ENCODE measurements at regions of chr14 and their contacts with region 1.

Region 1: DNA sequence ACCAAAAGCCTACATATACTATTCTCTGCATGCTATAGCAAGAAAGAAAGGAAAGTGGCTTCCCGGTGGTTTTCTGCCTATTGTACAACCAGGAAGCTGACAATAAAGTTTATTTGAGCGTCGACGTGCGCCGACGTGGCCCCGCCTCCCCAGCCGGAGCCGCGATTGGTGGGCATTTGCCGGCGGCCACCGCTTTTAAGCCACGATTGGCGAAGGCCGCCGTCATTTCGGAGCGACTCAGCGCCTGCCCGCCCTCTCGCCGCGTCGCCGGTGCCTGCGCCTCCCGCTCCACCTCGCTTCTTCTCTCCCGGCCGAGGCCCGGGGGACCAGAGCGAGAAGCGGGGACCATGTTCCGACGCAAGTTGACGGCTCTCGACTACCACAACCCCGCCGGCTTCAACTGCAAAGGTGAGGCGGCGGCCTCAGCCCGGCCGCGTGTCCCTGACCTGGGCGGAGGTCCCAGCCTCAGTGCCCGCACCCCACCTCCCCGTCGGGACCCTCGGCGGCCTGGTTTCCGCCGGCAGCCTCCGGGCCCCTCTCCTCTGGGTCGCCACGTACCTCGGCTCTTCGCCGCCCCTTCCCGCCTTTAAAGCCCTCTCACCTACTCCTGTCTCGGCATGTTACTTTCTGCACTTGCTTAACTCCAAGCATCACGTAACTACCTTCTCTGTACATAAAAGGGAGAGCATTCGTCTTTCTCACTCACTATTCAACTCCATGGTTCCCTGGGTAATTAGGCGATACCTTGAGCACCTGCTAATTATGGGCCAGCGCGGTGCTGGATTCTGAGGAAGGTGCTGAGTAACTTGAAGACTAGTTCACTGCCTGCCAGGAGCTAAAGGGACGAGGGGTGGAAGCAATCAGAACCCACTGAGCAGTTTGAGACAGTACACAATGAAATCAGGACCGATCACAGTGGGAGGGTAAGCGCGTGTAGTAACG is at the start of gene RTRAF:
- DNase-seq: peak; percentile 83 to 97 (median 89)
- ATAC-seq: peak; percentile 96
- H3K4me3 ChIP-seq: peak within 1 kb of the TSS; percentile 87
- H3K4me3 Mint-ChIP-seq: peak within 1 kb of the TSS; percentile 99
- H3K27ac ChIP-seq: peak within 1 kb of the TSS; percentile 84 to 87
- H3K27ac Mint-ChIP-seq: peak within 1 kb of the TSS; percentile 94
- H3K4me1 ChIP-seq: peaks cover 18% of the 10 kb centered on the region
- H3K4me1 Mint-ChIP-seq: peaks cover 53% of the 10 kb centered on the region
- H3K27me3 ChIP-seq: no peaks in the 10 kb centered on the region
- H3K27me3 Mint-ChIP-seq: no peaks in the 10 kb centered on the region
- CTCF ChIP-seq: no peak
- total RNA-seq, gene RTRAF: 155 to 157 TPM

Region 2: DNA sequence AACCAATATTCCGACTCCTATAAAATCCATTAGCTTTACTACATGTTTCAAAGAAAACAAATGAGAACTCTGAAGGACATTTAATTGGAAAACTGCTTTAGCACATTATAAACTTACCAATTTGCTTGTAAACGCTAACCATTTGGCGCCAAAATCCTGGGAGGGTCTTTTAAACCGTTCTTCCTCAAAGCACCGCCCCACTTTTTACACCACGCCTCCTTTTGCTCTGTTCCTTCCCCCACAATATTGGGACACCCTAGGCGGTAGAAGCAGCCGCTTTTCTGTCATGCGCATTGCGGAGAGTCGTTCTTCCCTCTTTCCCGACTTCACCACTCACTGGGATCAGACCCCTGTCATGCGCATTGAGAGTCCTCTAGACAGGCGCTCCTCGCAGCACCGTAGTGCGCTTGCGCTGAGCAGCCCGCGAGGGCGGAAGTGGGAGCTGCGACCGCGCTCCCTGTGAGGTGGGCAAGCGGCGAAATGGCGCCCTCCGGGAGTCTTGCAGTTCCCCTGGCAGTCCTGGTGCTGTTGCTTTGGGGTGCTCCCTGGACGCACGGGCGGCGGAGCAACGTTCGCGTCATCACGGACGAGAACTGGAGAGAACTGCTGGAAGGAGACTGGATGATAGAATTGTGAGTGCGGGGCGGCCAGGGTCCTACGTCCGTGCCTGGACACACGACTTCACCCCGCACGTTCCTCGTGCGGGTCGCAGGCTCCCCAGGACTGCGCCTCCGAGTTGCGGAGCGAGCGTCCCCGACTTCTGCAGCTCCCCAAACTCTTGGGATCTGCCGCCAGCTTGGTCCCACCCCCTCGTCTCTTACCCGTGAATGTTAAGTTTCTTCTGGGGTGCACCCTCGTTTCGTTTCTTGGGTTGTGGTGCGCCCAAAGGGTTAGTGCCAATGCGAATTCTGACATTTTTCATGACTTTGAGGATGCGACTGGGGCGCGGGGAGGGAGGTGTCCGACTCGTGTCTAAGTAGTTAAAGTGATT is 749.5 kb before region 1 on chr14 and contains the start of gene TMX1:
- CTCF ChIA-PET with region 1: no interaction called
- POLR2A ChIA-PET with region 1: no interaction called
- intact Hi-C with region 1: loop called in 1 of 2 experiments (anchors 5 kb)
- DNase-seq: peak; percentile 63 to 95 (median 80)
- ATAC-seq: peak; percentile 90
- H3K4me3 ChIP-seq: peak within 1 kb of the TSS; percentile 86
- H3K4me3 Mint-ChIP-seq: no peak within 1 kb of the TSS
- H3K27ac ChIP-seq: peak within 1 kb of the TSS; percentile 69 to 75
- H3K27ac Mint-ChIP-seq: no peak within 1 kb of the TSS
- H3K4me1 ChIP-seq: peaks cover 19% of the 10 kb centered on the region
- H3K4me1 Mint-ChIP-seq: peaks cover 42% of the 10 kb centered on the region
- H3K27me3 ChIP-seq: no peaks in the 10 kb centered on the region
- H3K27me3 Mint-ChIP-seq: no peaks in the 10 kb centered on the region
- CTCF ChIP-seq: no peak
- total RNA-seq, gene TMX1: 9.5 to 11.0 TPM

Region 3: DNA sequence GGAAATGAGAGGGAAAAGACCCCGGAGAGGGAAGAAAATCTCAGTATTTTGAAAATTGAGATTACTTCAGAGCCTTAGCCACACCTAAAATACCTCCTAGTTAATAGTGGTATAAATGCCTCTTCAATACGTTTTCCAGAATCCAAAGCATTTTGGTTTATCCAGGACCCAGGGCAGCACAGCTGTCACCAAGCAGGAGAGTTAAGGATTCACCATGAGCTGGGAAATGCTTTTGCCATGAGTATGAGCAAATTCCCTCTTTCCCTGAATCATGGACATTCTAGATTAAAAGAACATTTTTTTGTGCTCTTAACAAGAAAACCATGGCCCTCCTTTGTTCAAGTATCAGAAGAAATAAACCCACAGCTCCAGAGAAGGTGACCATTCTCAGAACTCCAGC is 22.0 kb before region 1 on chr14:
- CTCF ChIA-PET with region 1: no interaction called
- POLR2A ChIA-PET with region 1: no interaction called
- intact Hi-C with region 1: no loop called
- DNase-seq: no peak
- ATAC-seq: no peak
- H3K4me3 ChIP-seq: no peak overlapping the region
- H3K4me3 Mint-ChIP-seq: no peak overlapping the region
- H3K27ac ChIP-seq: no peak overlapping the region
- H3K27ac Mint-ChIP-seq: peak overlapping the region; percentile 10
- H3K4me1 ChIP-seq: peaks cover 3% of the 10 kb centered on the region
- H3K4me1 Mint-ChIP-seq: peaks cover 27% of the 10 kb centered on the region
- H3K27me3 ChIP-seq: no peaks in the 10 kb centered on the region
- H3K27me3 Mint-ChIP-seq: no peaks in the 10 kb centered on the region
- CTCF ChIP-seq: no peak

Region 4: DNA sequence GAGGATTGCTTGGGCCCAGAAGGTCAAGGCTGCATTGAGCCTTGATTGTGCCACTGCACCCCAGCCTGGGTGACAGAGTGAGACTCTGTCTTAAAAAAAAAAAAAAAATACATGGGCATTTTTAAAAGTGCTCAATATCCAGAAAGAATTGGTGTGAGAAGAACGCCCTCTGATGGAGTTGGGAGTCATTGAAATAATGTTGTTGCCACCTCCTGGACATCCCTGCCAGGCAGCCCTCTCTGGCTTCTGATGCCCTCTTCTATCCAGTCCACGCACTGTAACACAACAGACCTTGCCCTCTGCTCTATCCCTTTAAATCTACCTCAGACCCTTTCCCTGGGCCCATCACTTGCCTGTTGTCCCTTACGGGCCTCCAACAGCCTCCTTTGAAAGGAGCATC is 282.8 kb after region 1 on chr14:
- CTCF ChIA-PET with region 1: no interaction called
- POLR2A ChIA-PET with region 1: no interaction called
- intact Hi-C with region 1: loop called in 1 of 2 experiments (anchors 10 kb)
- DNase-seq: peak in 4 of 14 experiments; percentile 12 to 74 (median 64)
- ATAC-seq: no peak
- H3K4me3 ChIP-seq: no peak overlapping the region
- H3K4me3 Mint-ChIP-seq: no peak overlapping the region
- H3K27ac ChIP-seq: no peak overlapping the region
- H3K27ac Mint-ChIP-seq: no peak overlapping the region
- H3K4me1 ChIP-seq: peaks cover 20% of the 10 kb centered on the region
- H3K4me1 Mint-ChIP-seq: peaks cover 12% of the 10 kb centered on the region
- H3K27me3 ChIP-seq: peaks cover 20 to 21% of the 10 kb centered on the region in 2 experiments
- H3K27me3 Mint-ChIP-seq: peaks cover 42% of the 10 kb centered on the region
- CTCF ChIP-seq: no peak

Region 5: DNA sequence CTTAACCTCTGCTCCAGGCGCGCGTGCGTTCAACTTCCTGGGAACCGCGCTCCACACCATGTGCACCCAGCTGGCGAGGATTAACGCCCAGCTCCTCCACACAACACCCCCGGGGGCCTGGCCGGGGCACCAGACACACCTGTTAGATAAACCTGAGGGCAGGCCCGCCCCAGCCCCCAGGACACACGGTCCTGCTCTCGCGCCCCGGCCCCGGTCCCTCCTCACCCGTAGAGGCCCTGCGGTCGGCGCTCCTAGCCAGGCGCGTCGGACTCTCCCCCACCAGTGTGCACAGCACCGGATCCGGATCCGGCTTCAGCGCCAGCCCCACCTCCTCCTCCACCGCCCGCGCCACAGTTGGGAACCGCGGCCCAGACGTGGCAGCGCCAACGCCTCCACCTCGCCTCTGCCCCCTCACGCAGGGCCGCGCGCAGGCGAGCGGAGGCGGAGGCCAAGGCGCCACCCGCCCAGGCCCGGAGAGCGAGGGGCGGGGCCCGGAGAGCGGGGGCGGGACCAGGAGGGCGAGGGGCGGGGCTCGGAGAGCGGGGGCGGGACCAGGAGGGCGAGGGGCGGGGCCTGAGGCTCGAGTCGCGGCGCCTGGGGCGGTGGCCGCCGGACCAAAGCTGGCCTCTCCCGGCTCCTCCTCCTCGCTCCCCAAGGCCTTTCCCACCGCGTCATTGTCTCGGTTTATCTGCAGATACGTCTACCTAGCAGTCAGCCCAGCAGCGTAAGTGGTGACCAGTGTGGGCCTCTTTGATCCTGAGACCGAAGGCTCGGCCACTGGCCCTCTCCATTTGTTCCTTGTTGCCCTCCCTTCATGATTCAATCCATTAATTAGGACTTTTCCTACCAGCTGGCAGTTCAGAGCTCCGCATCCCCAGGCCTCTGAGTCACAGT is 801.9 kb after region 1 on chr14 and contains the start of gene GNPNAT1:
- CTCF ChIA-PET with region 1: no interaction called
- POLR2A ChIA-PET with region 1: no interaction called
- intact Hi-C with region 1: loop called in 1 of 2 experiments (anchors 10 kb)
- DNase-seq: peak; percentile 79 to 97 (median 87)
- ATAC-seq: peak; percentile 97
- H3K4me3 ChIP-seq: peak within 1 kb of the TSS; percentile 95
- H3K4me3 Mint-ChIP-seq: peak within 1 kb of the TSS; percentile 94
- H3K27ac ChIP-seq: peak within 1 kb of the TSS; percentile 64 to 78
- H3K27ac Mint-ChIP-seq: peak within 1 kb of the TSS; percentile 92
- H3K4me1 ChIP-seq: peaks cover 21% of the 10 kb centered on the region
- H3K4me1 Mint-ChIP-seq: peaks cover 51% of the 10 kb centered on the region
- H3K27me3 ChIP-seq: no peaks in the 10 kb centered on the region
- H3K27me3 Mint-ChIP-seq: no peaks in the 10 kb centered on the region
- CTCF ChIP-seq: no peak
- total RNA-seq, gene GNPNAT1: 3.8 to 4.6 TPM

Region 6: GRCh38 chr14:53055003-53055402 is 1065.4 kb after region 1 on chr14:
- CTCF ChIA-PET with region 1: no interaction called
- POLR2A ChIA-PET with region 1: no interaction called
- intact Hi-C with region 1: loop called in 1 of 2 experiments (anchors 10 kb)
- DNase-seq: peak in 3 of 14 experiments; percentile 47 to 62 (median 61)
- ATAC-seq: peak; percentile 51
- H3K4me3 ChIP-seq: no peak overlapping the region
- H3K4me3 Mint-ChIP-seq: no peak overlapping the region
- H3K27ac ChIP-seq: no peak overlapping the region
- H3K27ac Mint-ChIP-seq: no peak overlapping the region
- H3K4me1 ChIP-seq: no peaks in the 10 kb centered on the region
- H3K4me1 Mint-ChIP-seq: peaks cover 4% of the 10 kb centered on the region
- H3K27me3 ChIP-seq: no peaks in the 10 kb centered on the region
- H3K27me3 Mint-ChIP-seq: no peaks in the 10 kb centered on the region
- CTCF ChIP-seq: peak; percentile 90

Region 7: DNA sequence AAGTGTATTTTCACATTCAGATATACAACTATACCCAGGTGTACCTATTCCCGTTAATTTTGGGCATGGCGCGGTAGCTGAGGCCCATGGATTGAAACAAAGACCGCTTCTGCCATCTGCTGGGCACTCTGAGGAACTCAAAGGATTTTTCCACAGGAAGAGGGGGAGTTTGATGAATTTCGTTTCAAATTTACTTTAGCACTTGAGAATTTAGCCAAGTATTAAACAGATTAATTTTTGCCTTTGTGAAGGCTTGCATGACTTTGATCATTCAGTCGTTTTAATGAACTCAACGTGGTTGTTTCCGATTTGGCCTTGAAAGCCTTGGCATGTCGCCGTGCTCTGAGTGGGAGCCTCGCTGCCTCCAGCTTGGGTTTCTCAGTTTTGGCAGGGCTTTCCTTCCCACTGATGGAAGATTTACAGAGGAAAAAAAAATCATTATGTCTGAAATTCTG is 1316.7 kb after region 1 on chr14:
- CTCF ChIA-PET with region 1: no interaction called
- POLR2A ChIA-PET with region 1: no interaction called
- intact Hi-C with region 1: loop called in 1 of 2 experiments (anchors 10 kb)
- DNase-seq: peak in 13 of 14 experiments; percentile 1 to 63 (median 16)
- ATAC-seq: peak; percentile 41
- H3K4me3 ChIP-seq: peak overlapping the region; percentile 30
- H3K4me3 Mint-ChIP-seq: peak overlapping the region; percentile 0
- H3K27ac ChIP-seq: no peak overlapping the region
- H3K27ac Mint-ChIP-seq: no peak overlapping the region
- H3K4me1 ChIP-seq: peaks cover 3% of the 10 kb centered on the region
- H3K4me1 Mint-ChIP-seq: no peaks in the 10 kb centered on the region
- H3K27me3 ChIP-seq: peaks cover 0 to 7% of the 10 kb centered on the region in 2 experiments
- H3K27me3 Mint-ChIP-seq: peaks cover 5% of the 10 kb centered on the region
- CTCF ChIP-seq: peak; percentile 68